GM12878 (cell line): ENCODE measurements at regions of chr19 and their contacts with region 1.

Region 1: DNA sequence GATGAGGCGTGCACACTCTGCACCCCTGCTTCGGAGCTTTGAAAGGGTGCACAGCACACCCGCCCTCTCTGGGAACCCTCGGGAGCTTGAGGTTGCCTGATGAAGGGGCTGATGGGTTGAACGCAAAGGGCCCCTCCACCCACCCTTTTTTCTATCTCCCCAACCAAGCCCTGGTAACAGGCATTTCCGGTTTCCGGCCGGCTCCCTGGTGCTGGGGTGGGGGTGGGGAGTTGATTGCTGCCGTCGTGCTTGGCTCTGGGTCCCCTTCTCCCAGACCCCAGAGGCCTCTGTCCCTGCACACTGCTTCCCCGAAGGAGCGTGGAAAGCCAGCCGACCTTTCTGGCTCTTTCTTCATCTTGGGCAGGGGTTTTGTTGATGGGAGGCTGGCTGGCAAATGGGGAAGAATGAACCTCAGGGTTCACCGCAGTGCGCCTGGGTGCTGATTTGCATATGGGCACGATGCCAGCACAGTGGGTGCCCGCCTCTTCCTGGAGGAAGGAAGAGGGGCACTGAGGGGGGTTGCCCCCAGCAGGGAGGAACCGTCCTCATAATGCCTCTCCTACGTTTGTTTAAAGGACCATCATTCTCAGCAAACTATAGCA is 29.1 kb downstream of the VAV1 start:
- DNase-seq: peak; percentile 85
- ATAC-seq: peak; percentile 81
- H3K4me3 ChIP-seq: peak overlapping the region; percentile 66
- H3K27ac ChIP-seq: peak overlapping the region; percentile 89
- H3K4me1 ChIP-seq: peaks cover 25% of the 10 kb centered on the region
- H3K27me3 ChIP-seq: no peaks in the 10 kb centered on the region
- CTCF ChIP-seq: no peak
- EP300 ChIP-seq: no peak
- POLR2A ChIP-seq: peak; percentile 59; the same call in 1 of the 2 replicates
- RAD21 ChIP-seq: no peak

Region 2: DNA sequence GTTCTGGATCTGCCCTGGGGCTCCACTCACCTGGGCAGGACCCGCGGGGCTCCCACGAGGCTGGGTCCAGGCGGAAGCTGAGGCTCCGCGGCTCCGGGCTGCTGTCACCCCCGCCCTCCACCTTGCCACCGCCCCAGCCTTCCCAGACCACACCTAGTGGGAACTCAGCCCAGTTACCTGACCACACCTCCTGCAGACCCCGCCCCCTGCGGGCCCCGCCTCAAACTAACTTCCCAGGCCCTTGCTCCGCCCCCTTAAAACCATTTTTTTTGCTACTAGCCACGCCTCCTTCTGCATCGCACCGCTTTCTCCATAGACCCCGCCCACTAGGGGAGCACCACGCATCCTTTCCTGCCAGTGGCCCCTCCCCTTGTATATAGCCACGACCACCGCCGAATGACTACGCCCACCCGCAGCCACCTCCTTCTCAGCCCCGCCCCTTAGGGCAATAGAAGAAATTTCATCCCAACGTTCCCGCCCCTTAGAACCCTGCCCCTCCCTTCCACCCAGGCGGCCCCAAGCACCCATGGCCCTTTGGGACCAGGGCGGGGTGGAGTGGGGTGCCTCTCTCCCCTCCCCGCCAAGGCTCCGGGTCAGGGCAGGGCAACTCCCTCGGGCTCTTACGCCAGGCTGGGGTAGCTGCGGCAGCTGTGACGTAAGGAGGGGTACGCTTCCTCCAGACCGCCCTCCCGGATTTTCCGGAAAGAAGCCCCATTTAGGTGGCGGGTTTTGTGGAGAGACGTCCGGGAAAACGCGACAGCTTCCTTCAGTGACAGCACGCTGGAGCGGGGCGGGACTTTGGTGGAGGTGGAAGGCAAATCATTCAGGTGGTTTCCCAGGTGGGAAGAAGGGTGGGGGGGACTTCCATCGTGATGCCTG is 34.0 kb before region 1 on chr19 and contains the start of gene SH2D3A:
- CTCF ChIA-PET with region 1: interaction called, 47 read pairs
- POLR2A ChIA-PET with region 1: interaction called, 72 read pairs
- RAD21 ChIA-PET with region 1: interaction called, 98 read pairs
- SMC1A ChIA-PET with region 1: interaction called, 36 read pairs
- in situ Hi-C with region 1: no loop called
- intact Hi-C with region 1: loop called (anchors 1 kb)
- DNase-seq: peak; percentile 92
- ATAC-seq: peak; percentile 79
- H3K4me3 ChIP-seq: peak within 1 kb of the TSS; percentile 85
- H3K27ac ChIP-seq: peak within 1 kb of the TSS; percentile 83
- H3K4me1 ChIP-seq: peaks cover 23% of the 10 kb centered on the region
- H3K27me3 ChIP-seq: no peaks in the 10 kb centered on the region
- CTCF ChIP-seq: no peak
- EP300 ChIP-seq: no peak; a peak in 1 of 4 replicates
- POLR2A ChIP-seq: peak; percentile 70; the same call in 1 of the 2 replicates
- RAD21 ChIP-seq: no peak
- polyA plus RNA-seq, gene SH2D3A: 0.77 to 1.4 TPM

Region 3: GRCh38 chr19:6774821-6775707 is 26.5 kb before region 1 on chr19:
- CTCF ChIA-PET with region 1: interaction called, 47 read pairs
- POLR2A ChIA-PET with region 1: interaction called, 72 read pairs
- RAD21 ChIA-PET with region 1: interaction called, 98 read pairs
- SMC1A ChIA-PET with region 1: interaction called, 36 read pairs
- in situ Hi-C with region 1: no loop called
- intact Hi-C with region 1: loop called (anchors 1 kb)
- DNase-seq: no peak
- ATAC-seq: no peak
- H3K4me3 ChIP-seq: peak overlapping the region; percentile 96
- H3K27ac ChIP-seq: peak overlapping the region; percentile 13; the same call in 1 of the 2 replicates
- H3K4me1 ChIP-seq: peaks cover 21% of the 10 kb centered on the region
- H3K27me3 ChIP-seq: no peaks in the 10 kb centered on the region
- CTCF ChIP-seq: no peak
- EP300 ChIP-seq: no peak
- POLR2A ChIP-seq: no peak
- RAD21 ChIP-seq: no peak

Region 4: DNA sequence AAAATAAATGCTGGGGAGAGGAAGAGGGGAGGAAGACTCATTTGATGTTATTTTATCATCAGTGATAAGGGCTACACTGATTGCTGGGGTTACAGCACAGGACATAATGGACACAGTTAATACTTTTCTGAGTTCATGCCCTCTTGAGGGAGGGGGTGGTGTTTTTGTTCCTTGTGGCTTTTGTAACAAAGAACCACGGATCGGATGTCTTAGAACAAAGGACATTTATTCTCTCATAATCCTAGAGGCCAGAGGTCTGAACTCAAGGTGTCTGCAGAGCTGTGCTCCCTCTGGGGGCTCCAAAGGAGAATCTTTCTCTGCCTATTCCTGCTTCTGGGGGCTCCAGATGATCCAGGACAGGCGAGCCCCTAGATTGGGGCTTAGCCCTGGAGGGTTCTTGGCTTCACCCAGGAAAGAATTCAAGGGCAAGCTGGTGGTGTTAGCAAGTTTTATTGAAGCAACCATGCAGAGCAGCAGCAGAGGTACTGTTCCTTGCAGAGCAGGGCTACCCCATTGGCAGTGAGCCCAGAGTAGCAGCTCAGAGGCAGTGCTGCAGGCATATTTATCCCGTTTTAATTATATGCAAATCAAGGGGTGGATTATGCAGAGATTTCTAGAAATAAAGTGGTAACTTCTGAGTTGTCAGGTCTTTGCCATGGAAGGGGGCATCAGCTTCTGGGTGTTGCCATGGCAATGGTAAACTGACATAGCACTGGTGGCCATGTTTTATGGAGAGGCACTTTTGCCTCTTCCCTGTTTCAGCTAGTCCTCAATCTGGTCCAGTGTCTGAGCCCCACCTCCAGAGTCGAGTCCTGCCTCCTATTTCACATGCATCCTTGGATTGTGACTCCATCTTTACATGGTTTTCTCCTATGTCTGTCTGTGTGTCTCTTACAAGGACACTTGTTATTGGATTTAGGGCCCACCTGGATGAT is 11.1 kb before region 1 on chr19:
- CTCF ChIA-PET with region 1: interaction called, 7 read pairs
- POLR2A ChIA-PET with region 1: interaction called, 6 read pairs
- RAD21 ChIA-PET with region 1: interaction called, 8 read pairs
- SMC1A ChIA-PET with region 1: interaction called, 13 read pairs
- in situ Hi-C with region 1: no loop called
- intact Hi-C with region 1: no loop called
- DNase-seq: no peak
- ATAC-seq: no peak
- H3K4me3 ChIP-seq: no peak overlapping the region
- H3K27ac ChIP-seq: no peak overlapping the region
- H3K4me1 ChIP-seq: no peaks in the 10 kb centered on the region
- H3K27me3 ChIP-seq: no peaks in the 10 kb centered on the region
- CTCF ChIP-seq: no peak
- EP300 ChIP-seq: no peak
- POLR2A ChIP-seq: no peak
- RAD21 ChIP-seq: no peak

Region 5: DNA sequence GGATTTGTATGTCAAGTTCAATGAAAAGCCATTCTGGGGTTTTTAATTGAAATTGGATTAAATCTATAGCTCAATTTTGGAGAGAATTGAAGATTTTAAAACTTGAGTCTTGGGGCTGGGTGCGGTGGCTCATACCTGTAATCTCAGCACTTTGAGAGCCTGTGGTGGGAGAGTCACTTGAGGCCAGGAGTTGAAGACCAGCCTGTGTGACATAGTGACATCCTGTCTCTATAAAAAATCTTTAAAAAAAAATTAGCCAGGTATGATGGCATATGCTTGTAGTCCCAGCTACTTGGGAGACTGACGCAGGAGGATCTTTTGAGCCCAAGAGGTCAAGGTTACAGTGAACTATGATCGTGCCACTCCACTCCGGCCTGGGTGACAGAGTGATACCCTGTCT is 12.1 kb after region 1 on chr19:
- CTCF ChIA-PET with region 1: interaction called, 6 read pairs
- POLR2A ChIA-PET with region 1: interaction called, 11 read pairs
- RAD21 ChIA-PET with region 1: interaction called, 3 read pairs
- SMC1A ChIA-PET with region 1: interaction called, 6 read pairs
- in situ Hi-C with region 1: no loop called
- intact Hi-C with region 1: no loop called
- DNase-seq: no peak
- ATAC-seq: no peak
- H3K4me3 ChIP-seq: no peak overlapping the region
- H3K27ac ChIP-seq: no peak overlapping the region
- H3K4me1 ChIP-seq: no peaks in the 10 kb centered on the region
- H3K27me3 ChIP-seq: no peaks in the 10 kb centered on the region
- CTCF ChIP-seq: no peak
- EP300 ChIP-seq: no peak
- POLR2A ChIP-seq: no peak
- RAD21 ChIP-seq: no peak

Region 6: GRCh38 chr19:6833166-6833790 is 31.7 kb after region 1 on chr19:
- CTCF ChIA-PET with region 1: no interaction called
- POLR2A ChIA-PET with region 1: no interaction called
- RAD21 ChIA-PET with region 1: no interaction called
- SMC1A ChIA-PET with region 1: no interaction called
- in situ Hi-C with region 1: no loop called
- intact Hi-C with region 1: no loop called
- DNase-seq: no peak
- ATAC-seq: no peak
- H3K4me3 ChIP-seq: no peak overlapping the region
- H3K27ac ChIP-seq: no peak overlapping the region
- H3K4me1 ChIP-seq: no peaks in the 10 kb centered on the region
- H3K27me3 ChIP-seq: no peaks in the 10 kb centered on the region
- CTCF ChIP-seq: no peak
- EP300 ChIP-seq: no peak
- POLR2A ChIP-seq: no peak
- RAD21 ChIP-seq: no peak

Region 7: DNA sequence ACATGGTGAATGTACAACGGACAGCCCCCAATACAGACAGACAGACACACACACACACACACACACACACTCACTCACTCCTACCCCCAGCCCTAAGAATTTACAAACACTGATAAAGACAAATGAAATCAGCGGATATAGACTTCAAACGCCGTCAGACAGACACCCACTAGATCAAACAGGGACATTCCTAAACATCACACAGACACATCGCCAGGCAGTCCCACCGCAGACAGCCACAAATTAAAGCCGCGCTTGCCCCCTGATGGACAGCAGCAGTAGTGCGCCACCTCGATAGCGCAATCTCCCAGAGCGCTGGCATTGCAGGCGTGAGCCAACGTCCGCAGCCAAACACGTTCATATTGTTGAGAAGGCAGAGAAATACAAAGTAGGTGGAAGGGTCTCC is 61.1 kb after region 1 on chr19:
- CTCF ChIA-PET with region 1: interaction called, 9 read pairs
- POLR2A ChIA-PET with region 1: interaction called, 4 read pairs
- RAD21 ChIA-PET with region 1: interaction called, 12 read pairs
- SMC1A ChIA-PET with region 1: interaction called, 11 read pairs
- in situ Hi-C with region 1: no loop called
- intact Hi-C with region 1: loop called (anchors 1 kb)
- DNase-seq: peak; percentile 80
- ATAC-seq: peak; percentile 94
- H3K4me3 ChIP-seq: peak overlapping the region; percentile 67; the same call in 1 of the 2 replicates
- H3K27ac ChIP-seq: peak overlapping the region; percentile 56; the same call in 1 of the 2 replicates
- H3K4me1 ChIP-seq: peaks cover 11% of the 10 kb centered on the region
- H3K27me3 ChIP-seq: no peaks in the 10 kb centered on the region
- CTCF ChIP-seq: peak; percentile 92 to 99 (median 99); a peak in 5 of 6 replicates
- EP300 ChIP-seq: no peak
- POLR2A ChIP-seq: peak; percentile 65
- RAD21 ChIP-seq: peak; percentile 88